Motor neuron (in vitro differentiated cells): ENCODE measurements at regions of chr11 and their contacts with region 1.

Region 1: GRCh38 chr11:35617687-35618496 is at the start of gene FJX1:
- ATAC-seq: peak; percentile 60 to 76 (median 70)
- H3K4me3 ChIP-seq: peak within 1 kb of the TSS; percentile 58 to 95 (median 91)
- H3K27ac ChIP-seq: peak within 1 kb of the TSS; percentile 86 to 97
- H3K4me1 ChIP-seq: peaks cover 19 to 24% of the 10 kb centered on the region in 2 donors
- total RNA-seq, gene FJX1: 5.9 to 254 (median 19.8) TPM

Region 2: DNA sequence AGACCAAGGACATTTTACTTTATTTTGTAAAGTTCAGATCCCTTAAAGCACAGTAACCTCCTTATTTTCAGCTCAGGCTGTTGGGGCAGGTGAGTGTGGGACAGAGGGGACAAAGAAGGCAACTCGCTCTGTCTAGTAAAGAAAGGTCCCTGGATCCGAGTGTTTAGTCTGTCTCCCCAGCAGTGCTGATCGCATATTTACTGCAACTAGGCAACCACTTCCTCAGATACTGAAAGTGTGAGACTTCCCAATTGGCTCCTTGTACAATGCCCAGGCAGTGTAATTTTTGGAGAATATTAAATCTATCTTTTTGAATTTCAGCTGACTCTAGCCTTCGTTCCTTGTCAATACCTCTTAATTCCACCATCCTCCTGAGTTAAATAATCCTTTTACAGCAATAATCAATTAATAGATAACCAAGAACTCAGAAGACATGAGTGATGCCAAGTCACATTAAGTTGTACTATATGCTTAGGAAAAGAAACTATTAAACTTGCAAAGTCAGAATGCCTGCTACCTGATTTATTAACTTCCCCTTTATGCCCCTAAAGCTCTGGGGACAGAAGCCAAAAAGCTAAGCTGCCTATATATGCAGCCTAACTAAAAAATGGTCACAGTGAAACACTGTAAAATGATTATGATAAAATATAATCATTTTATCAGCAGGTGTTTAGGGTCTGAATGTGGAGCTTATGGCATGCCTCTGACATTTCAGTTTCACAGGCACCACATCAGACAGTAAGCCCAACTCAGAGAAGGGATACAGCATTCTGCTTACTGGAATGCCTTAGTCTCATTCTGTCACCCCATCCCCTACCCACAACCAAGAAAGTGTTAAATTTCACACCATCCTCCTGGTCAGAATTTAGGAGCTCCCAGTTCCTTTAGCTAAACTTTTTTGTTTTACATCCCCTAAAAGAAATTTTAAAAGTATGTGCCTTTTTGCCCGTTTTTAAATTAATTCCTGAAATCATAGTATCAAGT is 183.4 kb after region 1 on chr11:
- in situ Hi-C with region 1: loop called in 3 of 9 experiments (anchors 25 kb)
- ATAC-seq: peak in 1 of 8 experiments; percentile 93
- H3K4me3 ChIP-seq: no peak overlapping the region
- H3K27ac ChIP-seq: no peak overlapping the region
- H3K4me1 ChIP-seq: peaks cover 0 to 10% of the 10 kb centered on the region in 2 donors

Region 3: DNA sequence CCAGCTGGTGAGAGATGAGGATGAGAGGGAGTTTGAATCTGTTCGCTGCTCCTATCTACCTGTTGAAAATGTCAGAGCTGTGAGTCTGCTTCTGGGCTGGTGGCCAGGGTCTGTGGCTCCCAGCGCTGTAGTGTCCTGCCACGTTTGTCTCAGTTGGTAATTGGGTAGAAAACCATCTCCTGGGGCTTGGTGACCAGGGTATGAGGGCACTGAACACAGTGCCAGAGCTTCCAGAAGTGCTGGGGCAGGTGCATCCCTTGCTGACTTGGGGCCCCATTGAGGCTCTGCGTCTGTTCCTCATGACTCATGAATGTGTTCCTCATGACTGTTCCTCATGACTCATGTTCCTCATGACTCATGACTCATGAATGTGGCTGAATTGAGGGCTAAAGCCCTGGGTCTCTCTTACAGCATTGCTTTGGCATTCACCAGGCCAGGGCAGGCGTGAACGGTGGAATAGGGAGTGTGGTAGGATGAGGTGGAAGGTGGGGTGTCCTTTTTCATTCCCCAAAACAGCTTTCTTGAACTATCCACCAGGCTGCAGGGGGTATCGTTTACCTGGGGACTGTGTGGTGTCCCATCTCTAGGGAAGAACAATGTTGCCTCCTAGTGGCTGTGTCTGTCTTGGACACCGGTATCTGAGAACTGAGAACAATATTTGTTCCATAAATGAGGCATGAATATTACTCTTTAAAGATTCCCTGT is 531.8 kb after region 1 on chr11:
- in situ Hi-C with region 1: loop called in 3 of 9 experiments (anchors 25 kb)
- ATAC-seq: peak; percentile 93 to 98 (median 96)
- H3K4me3 ChIP-seq: no peak overlapping the region
- H3K27ac ChIP-seq: peak overlapping the region in 1 of 2 donors; percentile 69
- H3K4me1 ChIP-seq: peaks cover 25 to 42% of the 10 kb centered on the region in 2 donors